Activated CD4-positive, alpha-beta memory T cell treated with anti-CD3 and anti-CD28 coated beads, Interleukin-2, amount 10 ng/mL, durations not matched to agents 7 days and 5 days (primary cell): ENCODE measurements at regions of chr12 and their contacts with region 1.

Region 1: DNA sequence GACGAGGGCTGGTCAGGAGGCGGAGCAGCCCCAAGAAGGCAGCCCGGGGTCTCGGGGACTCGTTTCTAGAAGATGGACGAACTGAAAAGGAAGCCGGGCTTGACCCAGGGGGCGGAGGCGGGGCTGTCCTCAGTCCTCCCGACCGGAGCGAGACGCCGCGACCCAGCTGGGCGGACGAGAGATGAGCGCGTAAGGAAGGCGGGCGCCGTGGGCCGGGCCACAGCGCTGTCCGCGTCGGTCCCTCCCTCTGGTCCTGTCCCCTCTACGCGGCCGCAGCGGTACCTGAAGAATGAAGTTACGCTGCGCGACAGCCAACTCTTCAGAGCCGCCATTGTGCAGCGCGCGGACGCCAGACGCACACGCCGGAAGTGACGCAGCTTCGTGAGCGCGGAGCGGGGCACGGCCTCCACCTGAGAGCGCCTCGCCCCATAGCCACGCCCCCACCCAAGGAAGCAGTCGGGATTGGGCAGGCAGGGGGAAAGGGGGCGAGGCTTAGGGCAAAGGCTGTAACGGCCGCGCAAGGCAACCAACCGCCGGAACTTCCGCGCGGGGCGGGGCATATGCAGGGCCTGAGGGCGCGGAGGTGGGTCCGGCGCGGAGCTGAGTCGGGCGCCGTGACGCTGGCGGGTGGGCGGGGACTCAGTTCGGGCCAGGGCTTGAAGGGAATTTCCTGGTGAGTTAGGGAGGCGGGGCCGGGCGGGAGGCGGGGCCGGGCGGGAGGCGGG is at the start of gene DIABLO:
- DNase-seq: peak; percentile 100
- H3K4me3 Mint-ChIP-seq: peak within 1 kb of the TSS; percentile 84
- H3K27ac Mint-ChIP-seq: peak within 1 kb of the TSS; percentile 86
- H3K4me1 Mint-ChIP-seq: peaks cover 41% of the 10 kb centered on the region
- H3K27me3 Mint-ChIP-seq: no peaks in the 10 kb centered on the region
- total RNA-seq, gene DIABLO: 40.8 to 41.7 TPM

Region 2: GRCh38 chr12:122205063-122205925 is 20.6 kb before region 1 on chr12:
- CTCF ChIA-PET with region 1: interaction called, 4 read pairs
- POLR2A ChIA-PET with region 1: interaction called, 18 read pairs
- DNase-seq: no peak
- H3K4me3 Mint-ChIP-seq: peak overlapping the region; percentile 64
- H3K27ac Mint-ChIP-seq: no peak overlapping the region
- H3K4me1 Mint-ChIP-seq: peaks cover 12% of the 10 kb centered on the region
- H3K27me3 Mint-ChIP-seq: peaks cover 29% of the 10 kb centered on the region

Region 3: DNA sequence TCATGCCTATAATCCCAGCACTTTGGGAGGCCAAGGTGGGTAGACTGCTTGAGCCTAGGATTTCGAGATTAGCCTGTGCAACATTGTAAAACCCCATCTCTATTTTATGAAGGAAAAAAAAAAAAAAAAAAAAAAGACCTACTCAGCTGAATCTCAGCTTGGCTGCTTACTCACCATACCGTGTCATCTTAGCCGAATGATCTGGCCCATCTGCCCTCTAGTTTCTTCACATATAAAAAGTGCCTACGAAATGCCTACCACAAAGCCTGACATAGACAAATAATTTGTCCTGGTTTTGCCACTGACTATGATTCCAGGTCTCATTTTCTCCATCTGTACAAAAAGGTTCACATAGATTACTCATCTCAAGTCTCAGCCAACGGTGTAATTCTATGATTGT is 10.1 kb before region 1 on chr12:
- CTCF ChIA-PET with region 1: interaction called, 4 read pairs
- POLR2A ChIA-PET with region 1: interaction called, 18 read pairs
- DNase-seq: no peak
- H3K4me3 Mint-ChIP-seq: no peak overlapping the region
- H3K27ac Mint-ChIP-seq: peak overlapping the region; percentile 53
- H3K4me1 Mint-ChIP-seq: peaks cover 2% of the 10 kb centered on the region
- H3K27me3 Mint-ChIP-seq: no peaks in the 10 kb centered on the region

Region 4: GRCh38 chr12:122244565-122245371 is 18.9 kb after region 1 on chr12:
- CTCF ChIA-PET with region 1: interaction called, 20 read pairs
- POLR2A ChIA-PET with region 1: interaction called, 86 read pairs
- DNase-seq: peak; percentile 49
- H3K4me3 Mint-ChIP-seq: peak overlapping the region; percentile 70
- H3K27ac Mint-ChIP-seq: peak overlapping the region; percentile 96
- H3K4me1 Mint-ChIP-seq: peaks cover 31% of the 10 kb centered on the region
- H3K27me3 Mint-ChIP-seq: no peaks in the 10 kb centered on the region

Region 5: GRCh38 chr12:122265931-122266771 is 40.3 kb after region 1 on chr12 and contains the start of gene VPS33A:
- CTCF ChIA-PET with region 1: interaction called, 24 read pairs
- POLR2A ChIA-PET with region 1: interaction called, 45 read pairs
- DNase-seq: peak; percentile 96
- H3K4me3 Mint-ChIP-seq: peak within 1 kb of the TSS; percentile 94
- H3K27ac Mint-ChIP-seq: peak within 1 kb of the TSS; percentile 97
- H3K4me1 Mint-ChIP-seq: peaks cover 26% of the 10 kb centered on the region
- H3K27me3 Mint-ChIP-seq: peaks cover 3% of the 10 kb centered on the region
- total RNA-seq, gene VPS33A: 29.8 to 30.6 TPM